ENCODE measurements at regions of chr5 and their contacts with region 1.

Region 1: DNA sequence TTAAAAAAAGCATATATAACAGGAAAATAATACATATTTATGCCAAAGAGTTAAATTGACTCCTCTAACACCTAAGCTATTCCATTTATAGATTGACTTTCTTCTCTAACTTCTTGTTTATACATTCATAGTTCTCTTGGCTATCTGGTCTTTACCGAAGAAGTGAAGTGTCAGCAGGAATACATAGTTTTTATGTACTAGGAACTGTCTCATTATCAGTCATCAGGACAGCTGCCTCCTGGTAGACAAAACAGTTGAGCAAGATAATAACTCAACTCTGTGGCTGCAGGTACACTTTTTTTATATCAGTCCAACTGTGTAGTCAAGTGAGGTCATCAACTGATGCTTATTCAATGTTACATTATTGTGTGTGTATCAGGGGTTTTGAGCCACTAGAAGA is 1436.0 kb upstream of the NUDT12 start:
- DNase-seq: no peak

Region 2: GRCh38 chr5:105034397-105034754 is 35.8 kb after region 1 on chr5:
- intact Hi-C with region 1: loop called in 1 of 2 experiments (anchors 1 kb)
- DNase-seq: no peak

Measured in posterior vena cava (tissue), 2 donors.